Psoas muscle (tissue), 8 donors: ENCODE measurements at regions of chr10 and their contacts with region 1.

Region 1: DNA sequence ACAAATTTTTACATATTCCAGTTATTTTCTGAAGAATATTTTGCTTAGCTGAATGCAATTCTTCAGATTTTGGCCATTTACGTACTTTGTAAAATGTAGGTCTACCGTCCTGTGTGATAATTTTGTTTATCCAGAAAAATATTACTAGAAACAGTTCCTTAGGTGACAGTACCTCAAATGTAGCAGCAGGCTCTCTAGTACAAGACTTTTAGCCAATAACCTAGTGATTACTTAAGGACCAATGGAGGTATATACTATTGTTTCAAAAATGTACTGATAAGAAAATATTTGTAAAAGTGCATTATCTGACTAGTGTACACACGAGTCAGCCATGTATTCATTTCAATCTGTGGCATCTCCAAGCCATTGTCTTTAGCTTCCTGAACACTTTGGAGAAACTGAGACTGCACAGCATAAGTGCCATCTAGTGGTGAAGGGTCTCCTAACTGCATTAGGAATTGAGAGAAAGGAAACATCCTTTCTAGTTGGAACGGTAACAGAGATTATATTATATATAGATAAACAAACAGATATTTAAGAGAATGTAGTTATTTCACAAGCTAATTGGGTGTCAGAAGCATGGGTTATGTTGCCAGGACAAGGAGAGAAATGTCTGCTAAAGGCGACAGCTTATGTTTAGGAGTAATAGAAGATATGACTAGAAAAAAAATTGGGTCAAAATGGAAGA is 23.7 kb downstream of the RTKN2 start:
- DNase-seq: no peak
- ATAC-seq: peak; percentile 70 to 84 (median 74)
- H3K4me3 ChIP-seq: no peak overlapping the region
- H3K27ac ChIP-seq: no peak overlapping the region
- H3K4me1 ChIP-seq: peaks cover 10% of the 10 kb centered on the region
- H3K27me3 ChIP-seq: no peaks in the 10 kb centered on the region
- CTCF ChIP-seq: peak; percentile 90

Region 2: DNA sequence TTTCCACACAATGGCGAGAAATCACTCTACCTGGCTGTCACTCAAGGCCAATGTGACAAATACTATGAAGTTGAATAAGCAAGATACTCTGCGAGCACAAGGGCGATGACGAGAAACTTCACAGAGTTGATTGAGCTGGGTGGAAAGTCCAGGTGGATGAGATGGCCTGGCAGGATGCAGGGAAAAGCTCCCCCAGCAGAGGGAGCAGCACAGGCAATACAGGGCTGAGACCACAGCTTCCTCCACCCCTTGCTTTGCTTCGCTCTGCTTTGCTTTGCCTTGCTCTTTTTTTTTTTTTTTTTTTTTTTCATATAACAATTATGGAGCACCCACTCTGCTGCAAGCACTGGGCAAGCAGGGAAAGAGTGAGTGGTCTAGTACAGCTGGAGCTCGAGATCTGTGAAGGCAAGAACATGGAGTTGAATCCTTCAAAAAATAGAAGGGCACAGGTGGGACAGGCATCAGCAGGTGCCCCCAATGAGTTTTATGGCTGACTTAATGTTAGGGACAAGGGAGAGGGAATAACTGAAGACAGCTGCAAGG is 493.9 kb before region 1 on chr10:
- intact Hi-C with region 1: loop called (anchors 5 to 10 kb)
- DNase-seq: peak; percentile 50 to 58
- ATAC-seq: peak; percentile 75 to 88 (median 79)
- H3K4me3 ChIP-seq: no peak overlapping the region
- H3K27ac ChIP-seq: no peak overlapping the region
- H3K4me1 ChIP-seq: peaks cover 11% of the 10 kb centered on the region
- H3K27me3 ChIP-seq: no peaks in the 10 kb centered on the region
- CTCF ChIP-seq: peak; percentile 64

Region 3: GRCh38 chr10:61896854-61897661 is 347.9 kb before region 1 on chr10:
- intact Hi-C with region 1: loop called (anchors 2 to 5 kb)
- DNase-seq: peak; percentile 53 to 72
- ATAC-seq: peak; percentile 74 to 79 (median 78)
- H3K4me3 ChIP-seq: peak overlapping the region; percentile 59
- H3K27ac ChIP-seq: peak overlapping the region; percentile 44
- H3K4me1 ChIP-seq: peaks cover 24% of the 10 kb centered on the region
- H3K27me3 ChIP-seq: no peaks in the 10 kb centered on the region
- CTCF ChIP-seq: peak; percentile 66

Region 4: DNA sequence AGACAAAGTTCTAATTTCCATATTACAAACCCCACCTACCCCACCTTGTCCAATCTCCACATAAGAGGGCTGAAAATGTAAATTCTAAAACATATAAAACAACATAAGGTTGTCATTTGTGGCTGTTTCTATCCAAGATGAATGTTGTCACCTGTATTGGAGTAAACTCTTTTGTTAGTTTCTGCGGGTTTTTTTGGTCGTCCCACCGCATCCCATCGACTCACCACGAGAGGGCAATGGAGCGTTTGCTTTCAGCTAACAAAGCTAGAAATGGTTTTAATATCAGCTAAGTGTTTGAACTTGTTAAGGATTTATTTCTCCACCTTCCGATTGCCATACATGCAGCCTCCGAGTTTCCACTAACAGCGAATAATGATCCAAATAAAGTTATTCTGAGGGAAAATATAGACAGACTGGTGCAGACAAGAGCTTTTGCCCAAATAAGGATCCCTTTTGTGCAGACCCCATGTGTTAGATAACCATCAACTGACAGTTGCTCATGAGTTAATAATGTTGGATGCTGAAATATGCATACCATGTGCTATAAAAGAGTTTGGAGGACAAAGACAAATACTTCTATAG is 206.2 kb before region 1 on chr10:
- intact Hi-C with region 1: loop called (anchors 1 to 2 kb)
- DNase-seq: peak; percentile 62 to 77
- ATAC-seq: peak; percentile 64 to 88 (median 76)
- H3K4me3 ChIP-seq: peak overlapping the region; percentile 46
- H3K27ac ChIP-seq: peak overlapping the region; percentile 39
- H3K4me1 ChIP-seq: peaks cover 45% of the 10 kb centered on the region
- H3K27me3 ChIP-seq: no peaks in the 10 kb centered on the region
- CTCF ChIP-seq: peak; percentile 90

Region 5: DNA sequence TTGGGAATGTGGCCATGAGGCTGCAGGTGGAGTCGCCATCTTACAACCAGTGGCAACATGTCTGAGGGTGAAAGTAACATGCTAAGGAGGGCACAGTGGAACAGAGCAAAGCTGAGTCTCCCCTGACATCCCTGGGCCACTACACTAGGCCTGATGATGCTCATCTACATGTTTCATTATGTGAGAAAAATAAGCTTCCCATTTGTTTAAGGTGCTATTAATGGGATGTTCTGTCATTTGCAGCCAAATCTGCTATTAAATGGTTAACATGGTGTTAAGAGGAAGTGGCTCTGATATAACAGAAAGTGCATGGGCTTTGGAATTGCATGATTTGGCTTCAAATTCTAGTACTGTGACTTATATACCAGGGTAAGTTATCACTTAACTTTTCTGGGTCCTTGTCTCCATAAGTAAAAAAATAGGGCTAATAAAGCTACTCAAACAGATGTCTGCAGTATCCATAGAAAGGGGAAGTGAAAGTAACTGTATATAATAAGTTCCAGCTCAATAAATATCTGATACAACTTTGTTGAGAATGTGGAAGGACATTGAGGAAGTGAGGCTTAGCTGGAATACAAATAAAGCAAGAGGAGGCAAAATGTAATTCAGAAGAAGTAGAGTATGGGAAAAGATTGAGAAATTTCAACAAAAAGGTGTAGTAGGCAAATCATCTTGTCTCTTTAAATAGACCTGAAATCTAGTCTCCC is 135.2 kb before region 1 on chr10:
- intact Hi-C with region 1: loop called in 1 of 2 experiments (anchors 10 kb)
- DNase-seq: no peak
- ATAC-seq: no peak
- H3K4me3 ChIP-seq: no peak overlapping the region
- H3K27ac ChIP-seq: no peak overlapping the region
- H3K4me1 ChIP-seq: no peaks in the 10 kb centered on the region
- H3K27me3 ChIP-seq: no peaks in the 10 kb centered on the region
- CTCF ChIP-seq: no peak

Region 6: DNA sequence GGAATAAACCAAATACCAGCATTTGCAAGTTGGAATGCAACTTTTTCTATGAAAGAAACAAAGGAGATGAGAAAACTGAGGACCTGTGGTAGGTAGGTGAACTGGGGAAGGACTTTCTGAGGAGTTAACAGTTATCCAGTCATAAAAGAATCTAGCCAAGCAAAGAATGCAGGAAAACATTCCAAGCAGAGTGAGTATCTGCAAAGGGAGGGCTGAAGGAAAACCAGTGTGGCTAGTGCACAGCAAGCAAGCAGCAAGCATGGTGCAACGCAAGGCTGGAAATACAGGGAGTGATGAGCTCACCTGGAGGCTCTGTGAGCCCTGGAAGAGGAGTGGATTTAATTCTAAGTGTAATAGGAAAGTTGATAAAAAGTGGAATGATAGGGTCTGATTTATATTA is 20.3 kb before region 1 on chr10:
- intact Hi-C with region 1: no loop called
- DNase-seq: no peak
- ATAC-seq: no peak
- H3K4me3 ChIP-seq: no peak overlapping the region
- H3K27ac ChIP-seq: no peak overlapping the region
- H3K4me1 ChIP-seq: no peaks in the 10 kb centered on the region
- H3K27me3 ChIP-seq: no peaks in the 10 kb centered on the region
- CTCF ChIP-seq: no peak